Sciatic nerve (tissue), 2 donors: ENCODE measurements at regions of chr2 and their contacts with region 1.

Region 1: DNA sequence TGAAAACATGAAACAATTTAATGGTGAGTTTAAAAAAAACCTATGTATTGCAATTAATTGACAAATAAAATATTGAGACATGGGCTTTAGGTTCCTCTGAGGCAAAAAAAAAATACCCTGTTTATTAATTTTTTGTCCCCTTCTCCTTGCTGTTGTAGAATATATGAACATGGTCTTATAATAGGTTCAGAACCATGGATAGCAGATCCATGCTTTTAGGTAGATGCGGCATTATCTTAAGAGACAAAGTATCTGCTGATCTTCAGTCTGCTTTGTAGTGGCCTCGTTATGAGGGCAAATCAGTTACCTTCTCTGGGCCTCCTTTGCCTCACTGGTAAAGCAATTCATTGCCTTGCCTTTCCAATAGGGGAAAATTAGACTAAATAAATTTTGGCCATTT is 850.7 kb downstream of the NRXN1 start:
- DNase-seq: no peak
- ATAC-seq: no peak

Region 2: DNA sequence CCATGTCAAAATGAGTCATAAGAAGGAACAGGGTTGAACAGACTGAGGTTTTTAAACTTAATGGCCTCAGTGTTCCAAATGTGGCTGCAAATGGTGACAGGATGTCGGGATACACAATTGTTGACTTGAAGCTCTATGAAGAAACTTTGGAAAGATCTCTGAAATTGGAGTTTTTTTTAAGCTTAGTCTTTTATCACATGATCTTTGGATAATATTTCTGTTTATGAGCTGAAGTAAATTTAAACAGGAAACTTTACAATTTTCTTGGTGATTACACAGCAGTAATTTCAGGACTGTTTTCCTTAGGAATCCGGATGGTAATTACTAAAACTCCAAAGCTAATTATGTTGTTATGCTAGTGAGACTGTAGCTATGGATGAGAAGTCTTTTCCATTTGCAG is 1049.9 kb after region 1 on chr2:
- intact Hi-C with region 1: loop called (anchors 5 kb)
- DNase-seq: no peak
- ATAC-seq: no peak